ENCODE measurements at regions of chr19 and their contacts with region 1.

Region 1: GRCh38 chr19:37655689-37656371 is 565 bp upstream of the ZFP30 start:
- DNase-seq: peak; percentile 90
- ATAC-seq: peak; percentile 90

Region 2: DNA sequence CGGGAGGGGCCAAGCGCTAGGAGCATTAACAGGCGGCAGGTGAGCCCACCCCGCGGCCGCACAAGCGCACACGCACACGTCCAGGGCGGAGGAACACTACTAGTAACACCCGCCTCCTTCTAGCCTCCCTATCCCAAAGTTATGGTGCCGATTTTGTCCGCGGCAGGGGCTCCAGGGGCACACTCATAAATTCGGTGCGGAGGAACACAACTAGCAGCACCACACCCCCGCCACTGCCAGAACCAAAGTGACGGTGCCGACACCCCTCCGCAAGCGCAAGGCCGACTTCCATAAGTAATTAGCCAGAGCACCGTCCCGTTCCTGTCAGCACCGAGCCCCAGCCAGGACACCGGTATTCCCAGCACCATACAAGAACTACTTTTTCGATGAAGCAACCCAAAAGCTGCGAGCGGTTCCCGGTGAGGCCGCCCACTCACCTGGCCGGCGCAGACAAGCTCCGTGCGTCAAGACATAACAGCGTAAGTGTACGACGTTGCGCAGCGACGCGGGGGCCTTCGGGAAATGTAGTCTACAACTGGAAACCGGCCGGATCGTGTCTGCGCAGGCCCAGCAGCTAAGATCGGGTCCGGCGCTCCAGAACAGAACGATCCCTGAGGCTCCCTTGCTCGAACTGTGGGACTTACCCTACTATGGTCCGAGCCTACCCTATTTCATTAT is 61.4 kb before region 1 on chr19 and contains the starts of genes ZNF540 and ZNF571:
- intact Hi-C with region 1: loop called (anchors 2 kb)
- DNase-seq: peak; percentile 96
- ATAC-seq: peak; percentile 100
- total RNA-seq, gene ZNF540: 6.8 TPM
- total RNA-seq, gene ZNF571: 3.8 TPM

Region 3: GRCh38 chr19:37691881-37692504 is 36.2 kb after region 1 on chr19:
- intact Hi-C with region 1: loop called (anchors 5 kb)
- DNase-seq: peak; percentile 92
- ATAC-seq: peak; percentile 98

Region 4: DNA sequence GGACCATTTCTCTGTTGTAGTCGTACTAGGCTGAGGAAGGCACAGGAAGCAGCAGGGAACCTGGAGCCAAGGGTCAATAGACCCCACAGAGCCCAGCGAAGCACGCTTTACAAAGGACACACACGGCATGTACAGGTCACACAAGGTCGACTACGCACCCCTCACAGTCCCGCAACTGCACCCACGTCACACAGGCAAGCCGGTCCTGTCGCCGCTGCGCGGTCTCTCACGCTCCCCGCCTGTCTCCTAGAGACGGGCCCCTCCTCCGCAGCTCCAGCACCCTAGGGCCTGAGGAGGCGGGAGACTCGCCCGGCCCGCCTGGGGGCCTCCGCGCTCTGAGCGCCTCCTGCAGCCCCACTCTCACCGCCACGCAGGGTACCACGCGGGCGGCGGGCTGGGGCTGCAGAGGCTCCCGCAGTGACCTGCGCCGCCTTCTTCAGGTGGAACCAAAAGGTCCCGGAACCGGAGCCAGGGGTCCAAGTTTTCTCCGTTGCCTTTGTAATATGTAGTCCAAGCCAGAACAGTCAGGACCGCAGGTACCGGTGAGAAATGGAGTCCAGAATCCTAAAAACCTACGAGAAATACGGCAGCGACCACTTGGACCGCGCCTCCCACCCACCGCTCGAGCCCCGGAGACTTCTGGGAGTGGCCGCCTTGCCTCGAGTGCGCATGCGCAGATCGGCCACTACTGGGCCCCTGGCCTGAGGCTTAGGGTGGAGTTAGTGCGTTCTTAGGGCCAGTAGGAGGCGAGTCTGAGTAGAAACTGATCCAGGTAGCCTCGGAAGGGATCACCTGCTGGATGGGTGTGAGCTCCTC is 63.5 kb after region 1 on chr19 and contains the start of gene ZNF607:
- intact Hi-C with region 1: loop called (anchors 10 kb)
- DNase-seq: peak; percentile 94
- ATAC-seq: peak; percentile 99
- total RNA-seq, gene ZNF607: 6.1 TPM

Region 5: DNA sequence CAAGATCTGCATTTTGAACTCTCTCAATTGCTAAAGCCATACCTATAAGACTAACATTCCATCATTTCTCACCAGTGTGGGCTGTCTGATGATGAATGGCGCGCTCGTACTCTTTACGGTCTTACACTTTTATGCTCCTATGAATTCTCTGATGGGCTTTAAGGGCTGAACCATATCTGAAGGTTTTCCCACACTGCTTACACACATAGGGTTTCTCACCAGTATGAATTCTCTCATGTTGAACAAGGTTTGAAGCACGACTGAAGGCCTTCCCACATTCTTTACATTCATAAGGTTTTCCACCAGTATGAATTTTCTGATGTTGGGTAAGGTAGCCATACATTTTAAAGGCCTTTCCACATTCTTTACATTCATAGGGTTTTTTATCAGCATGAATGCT is 82.5 kb after region 1 on chr19:
- intact Hi-C with region 1: no loop called
- DNase-seq: no peak
- ATAC-seq: no peak